ENCODE measurements at regions of chr16 and their contacts with region 1.

Region 1: DNA sequence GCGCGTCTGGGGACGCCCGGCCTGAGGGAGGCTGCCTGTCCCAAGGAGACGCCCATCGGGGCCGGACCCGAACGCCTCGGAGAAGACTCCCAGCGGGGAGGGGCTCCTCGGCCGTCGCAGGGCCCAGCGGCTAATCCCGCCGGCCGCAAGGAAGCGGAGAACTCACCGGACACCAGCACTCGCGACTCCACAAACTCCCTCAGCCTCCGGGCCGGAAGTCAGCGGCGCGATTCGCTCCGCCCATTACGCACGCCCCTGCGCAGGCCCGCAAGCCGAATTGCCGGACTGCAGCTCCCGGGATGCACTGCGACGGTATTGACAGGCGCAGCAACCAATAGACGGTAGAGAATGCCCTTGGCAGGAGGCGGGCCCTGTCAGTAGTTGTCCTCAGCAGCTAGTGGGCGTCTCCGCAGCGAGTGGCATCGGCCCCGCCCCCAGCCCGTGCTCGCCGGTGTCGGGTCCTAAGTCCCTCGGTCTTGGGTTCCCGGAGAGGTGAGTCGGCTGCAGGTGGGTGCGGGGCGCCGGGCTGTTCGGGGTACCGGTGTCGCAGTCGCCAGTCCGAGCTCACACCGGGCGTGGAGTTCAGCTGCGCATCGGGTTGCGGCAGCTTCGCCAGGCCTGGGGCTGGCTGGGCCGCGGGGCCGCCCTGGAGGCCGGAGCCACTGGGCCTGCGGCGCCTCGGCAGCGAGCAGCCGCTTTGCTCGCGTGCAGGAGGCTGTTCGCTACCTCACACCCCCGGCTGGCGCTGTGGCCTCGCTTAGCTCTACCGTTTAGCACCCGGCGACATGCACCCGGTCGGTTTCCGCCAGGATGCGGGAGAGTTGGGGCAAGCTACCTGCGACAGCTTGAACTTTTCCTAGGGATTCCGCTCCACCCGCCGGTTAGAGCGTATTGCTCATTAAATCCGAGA is at the starts of genes ZNF174 and ZSCAN32:
- DNase-seq: peak; percentile 99
- ATAC-seq: peak; percentile 99
- H3K4me3 Mint-ChIP-seq: peak within 1 kb of the TSS; percentile 91
- H3K27ac Mint-ChIP-seq: peak within 1 kb of the TSS; percentile 83
- H3K4me1 Mint-ChIP-seq: peaks cover 49% of the 10 kb centered on the region
- H3K27me3 Mint-ChIP-seq: no peaks in the 10 kb centered on the region
- total RNA-seq, gene ZNF174: 7.4 to 9.5 TPM
- total RNA-seq, gene ZSCAN32: 15.7 to 17.4 TPM

Region 2: DNA sequence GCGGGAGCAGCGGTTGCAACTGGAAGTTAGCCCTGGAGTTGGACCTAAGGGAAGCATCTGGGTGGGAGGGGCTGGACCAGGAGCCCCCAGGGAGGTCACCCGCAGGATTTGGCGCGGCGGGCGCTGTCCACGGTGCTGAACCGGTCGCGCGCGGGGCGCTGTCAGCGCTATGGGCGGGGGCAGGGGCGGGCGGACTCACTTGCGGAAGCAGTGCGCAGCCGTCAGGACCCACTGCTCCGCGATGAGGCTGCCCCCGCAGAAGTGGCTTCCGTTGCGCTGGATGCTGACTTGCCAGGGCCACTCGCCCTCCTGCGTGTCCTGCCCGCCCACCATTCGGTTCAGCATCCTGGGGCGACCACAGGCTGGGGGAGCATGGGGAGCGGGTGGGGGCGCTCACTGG is 685.5 kb before region 1 on chr16:
- CTCF ChIA-PET with region 1: no interaction called
- POLR2A ChIA-PET with region 1: no interaction called
- intact Hi-C with region 1: no loop called
- DNase-seq: peak; percentile 89
- ATAC-seq: peak; percentile 91
- H3K4me3 Mint-ChIP-seq: no peak overlapping the region
- H3K27ac Mint-ChIP-seq: no peak overlapping the region
- H3K4me1 Mint-ChIP-seq: peaks cover 4% of the 10 kb centered on the region
- H3K27me3 Mint-ChIP-seq: no peaks in the 10 kb centered on the region

Region 3: DNA sequence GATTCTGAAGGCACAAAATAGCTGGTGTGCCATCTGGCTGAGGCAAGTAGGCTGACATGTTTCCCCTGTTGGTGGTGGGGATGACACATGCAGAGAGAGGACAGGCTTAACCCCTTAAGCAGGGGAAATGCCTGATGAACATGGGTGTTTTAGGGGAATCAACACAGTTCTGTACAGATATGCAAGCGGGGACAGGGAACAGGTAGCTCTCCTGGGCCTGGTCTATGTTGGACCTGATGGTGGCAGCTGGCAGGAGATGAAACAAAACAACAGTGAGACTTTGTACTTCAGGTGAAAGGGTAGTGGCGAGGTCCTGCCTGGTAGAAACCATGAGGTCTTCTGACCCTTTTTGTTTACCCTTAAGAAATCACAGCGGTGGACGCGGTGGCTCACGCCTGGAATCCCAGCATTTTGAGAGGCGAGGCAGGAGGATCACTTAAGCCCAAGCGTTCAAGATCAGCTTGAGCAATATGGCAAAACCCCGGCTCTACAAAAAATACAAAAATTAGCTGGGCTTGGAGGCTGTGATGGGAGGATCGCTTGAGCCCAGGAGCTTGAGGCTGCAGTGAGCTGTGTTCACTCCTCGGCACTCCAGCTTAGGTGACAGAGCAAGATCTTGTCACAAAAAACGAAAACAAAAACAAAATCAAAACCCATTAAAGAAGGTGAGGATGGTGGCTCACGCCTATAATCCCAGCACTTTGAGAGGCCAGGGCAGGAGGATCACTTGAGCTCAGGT is 202.5 kb before region 1 on chr16:
- CTCF ChIA-PET with region 1: no interaction called
- POLR2A ChIA-PET with region 1: no interaction called
- intact Hi-C with region 1: no loop called
- DNase-seq: no peak
- ATAC-seq: no peak
- H3K4me3 Mint-ChIP-seq: no peak overlapping the region
- H3K27ac Mint-ChIP-seq: no peak overlapping the region
- H3K4me1 Mint-ChIP-seq: no peaks in the 10 kb centered on the region
- H3K27me3 Mint-ChIP-seq: peaks cover 19% of the 10 kb centered on the region

Region 4: DNA sequence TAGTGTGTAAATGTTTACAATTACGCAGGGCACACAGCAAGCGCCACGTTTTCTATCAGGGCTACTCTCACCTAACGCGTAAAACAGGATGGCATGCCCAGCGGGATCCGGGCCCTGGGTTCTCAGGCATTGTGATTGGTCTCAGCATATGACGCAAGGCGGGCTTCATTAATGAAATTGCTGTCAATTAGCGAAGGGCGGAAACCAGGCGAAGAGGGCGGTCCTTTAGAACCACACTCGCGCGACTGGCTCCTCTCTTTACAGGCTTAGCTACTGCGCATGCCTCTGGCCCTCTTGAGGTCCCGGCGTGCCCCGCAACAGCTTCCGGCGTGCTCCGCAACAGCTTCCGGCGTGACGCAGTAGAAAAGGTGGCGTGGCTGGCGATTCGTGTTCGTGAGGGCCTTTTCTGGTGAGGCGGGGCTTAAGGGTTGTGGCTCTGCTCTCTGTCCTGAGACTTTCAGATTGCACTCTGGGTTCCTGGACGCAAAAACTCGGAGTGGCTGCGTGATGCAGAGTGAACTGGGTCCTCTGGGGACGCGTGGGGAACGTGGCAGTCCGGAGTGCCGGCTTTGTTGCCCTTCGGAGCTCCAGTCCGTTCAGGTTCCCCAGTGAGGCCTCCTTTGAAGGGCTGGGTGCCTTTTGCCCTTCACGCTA is 36.1 kb before region 1 on chr16:
- CTCF ChIA-PET with region 1: no interaction called
- POLR2A ChIA-PET with region 1: no interaction called
- intact Hi-C with region 1: loop called in 1 of 2 experiments (anchors 1 kb)
- DNase-seq: peak; percentile 94
- ATAC-seq: peak; percentile 98
- H3K4me3 Mint-ChIP-seq: peak overlapping the region; percentile 76
- H3K27ac Mint-ChIP-seq: peak overlapping the region; percentile 91
- H3K4me1 Mint-ChIP-seq: peaks cover 8% of the 10 kb centered on the region
- H3K27me3 Mint-ChIP-seq: peaks cover 6% of the 10 kb centered on the region

Region 5: GRCh38 chr16:3472878-3473595 is 72.0 kb after region 1 on chr16:
- CTCF ChIA-PET with region 1: no interaction called
- POLR2A ChIA-PET with region 1: no interaction called
- intact Hi-C with region 1: no loop called
- DNase-seq: peak; percentile 34
- ATAC-seq: peak; percentile 48
- H3K4me3 Mint-ChIP-seq: no peak overlapping the region
- H3K27ac Mint-ChIP-seq: peak overlapping the region; percentile 68
- H3K4me1 Mint-ChIP-seq: peaks cover 19% of the 10 kb centered on the region
- H3K27me3 Mint-ChIP-seq: no peaks in the 10 kb centered on the region

Measured in activated CD4-positive, alpha-beta T cell treated with anti-CD3 and anti-CD28 coated beads for 36 hours (primary cell).